ENCODE measurements at regions of chr19 and their contacts with region 1.

Region 1: GRCh38 chr19:39212375-39212742 is 8.3 kb upstream of the SYCN start:
- DNase-seq: no peak
- ATAC-seq: peak; percentile 64
- H3K4me3 ChIP-seq: no peak overlapping the region
- H3K27ac ChIP-seq: no peak overlapping the region
- H3K4me1 ChIP-seq: no peaks in the 10 kb centered on the region
- H3K27me3 ChIP-seq: peaks cover 16% of the 10 kb centered on the region
- CTCF ChIP-seq: peak; percentile 32; the same call in 1 of the 2 replicates
- POLR2A ChIP-seq: no peak
- RAD21 ChIP-seq: peak; percentile 58

Region 2: DNA sequence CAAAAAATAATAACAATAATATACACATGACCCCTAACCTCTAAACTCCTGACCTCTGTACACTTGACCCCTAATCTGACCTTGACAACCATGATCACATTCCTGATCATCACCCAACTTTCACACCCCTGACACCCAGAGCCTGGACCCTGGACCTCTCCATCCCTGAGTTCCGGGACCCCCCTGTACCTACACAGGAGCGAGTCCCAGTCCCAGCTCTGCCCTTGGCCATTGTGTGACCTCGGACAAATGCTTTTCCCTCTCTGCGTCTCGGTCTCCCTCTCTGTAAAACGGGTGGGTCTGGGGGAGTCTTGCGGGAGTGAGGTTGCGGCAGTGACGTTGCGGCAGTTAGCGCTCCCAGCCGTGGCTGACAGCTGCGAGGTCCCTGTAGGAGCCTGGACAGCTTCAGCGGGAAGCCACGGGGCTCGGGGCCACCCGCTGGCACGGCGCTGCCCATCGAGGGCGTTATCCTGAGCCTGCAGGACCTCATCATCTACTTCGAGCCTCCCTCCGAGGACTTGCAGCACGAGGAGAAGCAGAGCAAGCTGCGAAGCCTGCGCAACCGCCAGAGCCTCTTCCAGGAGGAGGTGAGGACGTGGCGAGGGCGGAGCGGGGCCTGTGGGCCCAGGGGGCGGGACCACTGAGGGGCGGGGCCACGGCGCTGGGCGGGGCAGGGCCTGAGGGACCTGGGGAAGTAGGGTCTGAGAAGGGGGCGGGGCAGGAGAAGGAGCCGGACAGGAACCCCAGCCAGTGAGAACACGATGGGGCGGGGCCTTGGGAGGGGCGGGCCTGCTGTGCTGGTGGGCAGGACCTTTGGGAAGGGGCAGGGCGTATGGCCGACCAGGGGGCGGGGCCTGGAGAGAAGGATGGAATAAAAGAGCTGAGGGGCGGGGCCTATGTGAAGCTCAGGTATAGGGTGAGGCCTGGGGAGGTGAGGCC is 759.7 kb before region 1 on chr19:
- CTCF ChIA-PET with region 1: no interaction called
- POLR2A ChIA-PET with region 1: no interaction called
- dilution Hi-C with region 1: no loop called
- in situ Hi-C with region 1: loop called (anchors 25 kb)
- intact Hi-C with region 1: no loop called
- DNase-seq: no peak
- ATAC-seq: no peak
- H3K4me3 ChIP-seq: no peak overlapping the region
- H3K27ac ChIP-seq: no peak overlapping the region
- H3K4me1 ChIP-seq: no peaks in the 10 kb centered on the region
- H3K27me3 ChIP-seq: peaks cover 3% of the 10 kb centered on the region; the same call in 1 of the 2 replicates
- CTCF ChIP-seq: no peak
- POLR2A ChIP-seq: no peak
- RAD21 ChIP-seq: no peak

Region 3: GRCh38 chr19:39282021-39282420 is 69.7 kb after region 1 on chr19:
- CTCF ChIA-PET with region 1: no interaction called
- POLR2A ChIA-PET with region 1: no interaction called
- dilution Hi-C with region 1: no loop called
- in situ Hi-C with region 1: no loop called
- intact Hi-C with region 1: loop called (anchors 10 kb)
- DNase-seq: no peak
- ATAC-seq: no peak
- H3K4me3 ChIP-seq: no peak overlapping the region
- H3K27ac ChIP-seq: no peak overlapping the region
- H3K4me1 ChIP-seq: no peaks in the 10 kb centered on the region
- H3K27me3 ChIP-seq: peaks cover 8% of the 10 kb centered on the region
- CTCF ChIP-seq: no peak
- POLR2A ChIP-seq: no peak
- RAD21 ChIP-seq: no peak

Region 4: GRCh38 chr19:40191836-40192646 is 979.7 kb after region 1 on chr19:
- CTCF ChIA-PET with region 1: no interaction called
- POLR2A ChIA-PET with region 1: no interaction called
- dilution Hi-C with region 1: no loop called
- in situ Hi-C with region 1: no loop called
- intact Hi-C with region 1: no loop called
- DNase-seq: peak; percentile 19
- ATAC-seq: peak; percentile 43
- H3K4me3 ChIP-seq: peak overlapping the region; percentile 96
- H3K27ac ChIP-seq: peak overlapping the region; percentile 1; the same call in 1 of the 2 replicates
- H3K4me1 ChIP-seq: peaks cover 9% of the 10 kb centered on the region
- H3K27me3 ChIP-seq: no peaks in the 10 kb centered on the region
- CTCF ChIP-seq: 0 out of 2 replicates have a peak, but pooled peaks have one; percentile 7
- POLR2A ChIP-seq: no peak
- RAD21 ChIP-seq: no peak; the same call in 1 of the 2 replicates